ENCODE measurements at regions of chr15 and their contacts with region 1.

Region 1: DNA sequence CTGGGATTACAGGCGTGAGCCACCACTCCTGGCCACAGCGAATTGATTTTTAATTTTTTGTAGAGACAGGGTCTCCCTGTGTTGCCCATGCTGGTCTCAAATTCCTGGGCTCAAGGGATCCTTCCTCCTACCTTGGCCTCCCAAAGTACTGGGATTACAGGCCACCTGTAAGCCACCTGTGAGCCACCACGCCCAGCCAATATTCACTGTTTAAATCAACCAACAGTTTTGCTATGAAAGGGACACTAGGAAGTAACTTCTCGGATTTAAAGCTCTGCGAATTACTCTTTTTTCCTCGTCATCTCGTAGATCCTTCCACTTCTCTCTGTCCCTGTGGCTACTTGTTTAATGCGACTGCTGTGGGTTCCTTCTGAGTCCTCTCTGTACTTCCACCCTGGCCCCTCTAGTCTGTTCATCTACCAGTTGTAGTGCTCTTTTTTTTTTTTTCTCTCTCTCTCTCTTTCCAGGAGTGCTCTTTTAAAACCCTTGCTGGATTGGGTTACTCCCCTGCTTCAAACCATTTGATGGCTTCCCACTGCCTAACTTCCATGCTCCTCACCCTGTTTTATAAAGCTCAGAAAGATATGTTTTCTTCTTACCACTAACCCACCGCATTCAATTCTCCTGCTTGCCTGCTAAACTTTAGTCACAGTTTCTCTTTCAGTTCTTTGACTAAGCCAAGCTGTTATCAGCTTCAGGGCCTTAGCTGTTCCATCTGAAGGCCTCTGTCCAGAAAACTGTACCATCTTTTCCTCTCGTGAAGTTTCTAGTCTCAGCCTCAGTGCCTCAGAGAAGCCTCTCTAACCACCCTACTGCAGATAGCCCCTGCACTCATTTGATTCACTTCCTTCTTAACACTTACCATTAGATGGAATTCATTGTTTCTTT is 12.4 kb downstream of the RTF1 start:
- DNase-seq: peak; percentile 20
- ATAC-seq: peak; percentile 91
- H3K4me3 Mint-ChIP-seq: peak overlapping the region; percentile 7
- H3K27ac Mint-ChIP-seq: peak overlapping the region; percentile 91
- H3K4me1 Mint-ChIP-seq: peaks cover 22% of the 10 kb centered on the region
- H3K27me3 Mint-ChIP-seq: no peaks in the 10 kb centered on the region

Region 2: GRCh38 chr15:40763801-40764732 is 665.2 kb before region 1 on chr15 and contains the start of gene GCHFR:
- CTCF ChIA-PET with region 1: no interaction called
- POLR2A ChIA-PET with region 1: no interaction called
- intact Hi-C with region 1: no loop called
- DNase-seq: peak; percentile 85
- ATAC-seq: peak; percentile 73
- H3K4me3 Mint-ChIP-seq: peak within 1 kb of the TSS; percentile 79
- H3K27ac Mint-ChIP-seq: peak within 1 kb of the TSS; percentile 90
- H3K4me1 Mint-ChIP-seq: peaks cover 35% of the 10 kb centered on the region
- H3K27me3 Mint-ChIP-seq: no peaks in the 10 kb centered on the region
- total RNA-seq, gene GCHFR: 32.8 to 41.1 TPM

Region 3: GRCh38 chr15:41079717-41080116 is 349.5 kb before region 1 on chr15:
- CTCF ChIA-PET with region 1: no interaction called
- POLR2A ChIA-PET with region 1: no interaction called
- intact Hi-C with region 1: no loop called
- DNase-seq: no peak
- ATAC-seq: no peak
- H3K4me3 Mint-ChIP-seq: no peak overlapping the region
- H3K27ac Mint-ChIP-seq: no peak overlapping the region
- H3K4me1 Mint-ChIP-seq: no peaks in the 10 kb centered on the region
- H3K27me3 Mint-ChIP-seq: no peaks in the 10 kb centered on the region

Region 4: GRCh38 chr15:41291065-41291631 is 138.1 kb before region 1 on chr15:
- CTCF ChIA-PET with region 1: no interaction called
- POLR2A ChIA-PET with region 1: interaction called, 10 read pairs
- intact Hi-C with region 1: no loop called
- DNase-seq: no peak
- ATAC-seq: peak; percentile 57
- H3K4me3 Mint-ChIP-seq: no peak overlapping the region
- H3K27ac Mint-ChIP-seq: no peak overlapping the region
- H3K4me1 Mint-ChIP-seq: peaks cover 22% of the 10 kb centered on the region
- H3K27me3 Mint-ChIP-seq: no peaks in the 10 kb centered on the region

Region 5: DNA sequence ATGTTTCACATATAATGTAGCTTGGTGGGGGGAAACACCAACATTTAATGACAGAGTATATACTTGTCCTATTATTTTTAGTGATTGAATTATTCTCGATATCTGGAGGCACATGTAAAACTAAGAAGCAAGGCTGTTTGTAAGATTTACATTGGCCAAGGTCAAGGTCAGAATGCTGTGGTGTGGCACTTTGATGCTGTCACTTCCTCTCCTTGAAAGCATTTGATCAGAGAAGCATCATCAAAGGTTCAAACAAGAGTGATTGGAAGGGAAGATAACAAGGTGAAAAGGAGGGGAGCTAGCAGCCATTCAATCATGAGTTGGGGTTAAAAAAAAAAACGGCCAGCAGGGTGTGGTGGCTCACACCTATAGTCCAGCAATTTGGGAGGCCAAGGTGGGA is 14.0 kb after region 1 on chr15:
- CTCF ChIA-PET with region 1: interaction called, 10 read pairs
- POLR2A ChIA-PET with region 1: interaction called, 5 read pairs
- intact Hi-C with region 1: no loop called
- DNase-seq: no peak
- ATAC-seq: no peak
- H3K4me3 Mint-ChIP-seq: no peak overlapping the region
- H3K27ac Mint-ChIP-seq: peak overlapping the region; percentile 51
- H3K4me1 Mint-ChIP-seq: peaks cover 7% of the 10 kb centered on the region
- H3K27me3 Mint-ChIP-seq: no peaks in the 10 kb centered on the region